AG04449 (cell line): ENCODE measurements at regions of chr22 and their contacts with region 1.

Region 1: DNA sequence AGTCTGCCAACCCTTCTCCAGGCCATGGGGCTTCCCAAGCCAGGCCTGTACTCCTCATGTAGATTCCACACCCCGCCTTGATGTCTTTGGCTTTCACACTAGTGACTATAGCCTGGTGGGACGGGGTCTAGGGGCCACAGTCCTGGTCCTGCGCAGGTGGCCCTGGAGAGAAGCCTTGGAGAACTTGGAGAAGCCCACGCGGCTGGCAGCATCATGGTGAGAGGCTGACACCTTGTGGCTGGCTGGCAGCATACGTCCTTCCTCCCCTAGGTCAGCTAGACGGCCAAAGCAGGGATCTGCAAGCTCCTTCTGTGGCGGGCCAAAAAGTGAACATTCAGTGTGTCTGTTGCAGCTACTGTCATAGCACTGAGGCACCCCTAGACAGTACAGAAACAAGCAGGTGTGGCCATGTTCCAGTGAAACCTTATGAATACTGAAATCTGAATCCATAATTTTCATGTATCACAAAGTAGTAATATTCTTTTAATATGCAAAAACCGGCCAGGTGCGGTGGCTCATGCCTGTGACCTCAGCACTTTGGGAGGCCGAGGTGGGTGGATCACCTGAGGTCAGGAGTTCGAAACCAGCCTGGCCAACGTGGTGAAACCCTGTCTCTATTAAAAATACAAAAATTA is 42.0 kb downstream of the FAM83F start:
- DNase-seq: no peak
- H3K4me3 ChIP-seq: no peak overlapping the region
- CTCF ChIP-seq: peak; percentile 90

Region 2: GRCh38 chr22:39496131-39496838 is 540.4 kb before region 1 on chr22:
- CTCF ChIA-PET with region 1: interaction called, 14 read pairs
- POLR2A ChIA-PET with region 1: no interaction called
- DNase-seq: no peak
- H3K4me3 ChIP-seq: no peak overlapping the region
- CTCF ChIP-seq: peak; percentile 81

Region 3: GRCh38 chr22:39559454-39560105 is 477.1 kb before region 1 on chr22:
- CTCF ChIA-PET with region 1: interaction called, 10 read pairs
- POLR2A ChIA-PET with region 1: no interaction called
- DNase-seq: no peak
- H3K4me3 ChIP-seq: no peak overlapping the region
- CTCF ChIP-seq: peak; percentile 41